Activated T-helper 2 cell treated with anti-CD3 and anti-CD28 coated beads, Interferon-gamma antibody, Interleukin-2, Interleukin-4, amounts not matched to agents 10 μg/mL and 5 μg/mL and 100 μg/mL, durations not matched to agents 14 hours and 24 hours and 36 hours (primary cell): ENCODE measurements at regions of chr14 and their contacts with region 1.

Region 1: DNA sequence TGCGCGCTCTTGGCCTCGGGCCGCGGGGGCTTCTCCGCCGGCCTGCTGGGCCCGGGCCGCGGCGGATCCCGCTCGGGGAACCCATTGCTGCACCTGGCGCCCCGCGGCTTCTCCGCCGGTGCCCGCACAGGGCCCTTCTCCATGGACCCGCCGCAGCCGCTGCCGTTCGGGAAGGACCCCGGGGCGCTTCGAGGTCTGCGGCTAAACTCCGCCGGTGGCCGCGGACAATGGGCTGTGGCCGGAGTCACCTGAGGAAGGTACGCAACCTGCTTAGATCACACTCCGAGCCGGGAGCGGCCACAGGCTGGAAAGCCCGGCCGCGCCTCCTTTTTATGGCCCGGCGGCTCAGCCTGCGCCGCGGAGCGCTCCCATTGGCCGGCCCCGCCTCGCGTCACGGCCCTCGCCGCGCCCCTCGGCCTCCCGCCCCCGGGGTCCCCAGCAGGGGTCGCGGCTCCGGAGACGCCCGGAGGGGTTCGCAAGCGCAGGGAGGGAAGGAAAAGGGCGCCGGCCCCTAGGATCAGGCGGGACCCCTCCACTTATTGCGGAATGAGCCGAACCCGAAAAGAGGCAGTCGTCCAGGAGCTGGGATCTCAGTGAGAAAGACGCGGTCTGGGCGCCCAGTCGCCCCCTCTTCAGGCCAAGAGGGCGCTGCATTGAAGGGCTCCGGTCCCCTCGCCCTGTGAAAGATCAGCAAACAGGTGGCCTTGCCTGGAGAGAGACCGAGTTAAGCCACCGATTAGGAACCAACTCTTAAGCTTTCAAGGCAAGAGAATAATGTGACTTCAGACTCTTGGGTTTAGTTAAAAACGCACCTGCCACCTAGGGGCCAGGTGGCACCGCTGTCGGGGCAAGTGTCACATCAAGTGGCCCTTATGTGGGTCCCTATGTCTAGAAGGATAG is at the start of gene GCH1:
- DNase-seq: peak; percentile 75
- H3K4me3 Mint-ChIP-seq: peak within 1 kb of the TSS; percentile 85
- H3K27ac Mint-ChIP-seq: peak within 1 kb of the TSS; percentile 81
- H3K4me1 Mint-ChIP-seq: peaks cover 40% of the 10 kb centered on the region
- H3K27me3 Mint-ChIP-seq: no peaks in the 10 kb centered on the region
- total RNA-seq, gene GCH1: 51.4 and 52.5 TPM in 2 replicates

Region 2: GRCh38 chr14:54435500-54435981 is 467.2 kb before region 1 on chr14:
- intact Hi-C with region 1: loop called (anchors 5 kb)
- DNase-seq: no peak
- H3K4me3 Mint-ChIP-seq: peak overlapping the region; percentile 70
- H3K27ac Mint-ChIP-seq: peak overlapping the region; percentile 95
- H3K4me1 Mint-ChIP-seq: peaks cover 71% of the 10 kb centered on the region
- H3K27me3 Mint-ChIP-seq: no peaks in the 10 kb centered on the region

Region 3: GRCh38 chr14:54881761-54882401 is 20.9 kb before region 1 on chr14:
- intact Hi-C with region 1: loop called (anchors 1 kb)
- DNase-seq: no peak
- H3K4me3 Mint-ChIP-seq: peak overlapping the region; percentile 82
- H3K27ac Mint-ChIP-seq: peak overlapping the region; percentile 94
- H3K4me1 Mint-ChIP-seq: peaks cover 50% of the 10 kb centered on the region
- H3K27me3 Mint-ChIP-seq: no peaks in the 10 kb centered on the region

Region 4: GRCh38 chr14:54920052-54920451 is 17.3 kb after region 1 on chr14:
- intact Hi-C with region 1: no loop called
- DNase-seq: no peak
- H3K4me3 Mint-ChIP-seq: no peak overlapping the region
- H3K27ac Mint-ChIP-seq: no peak overlapping the region
- H3K4me1 Mint-ChIP-seq: peaks cover 5% of the 10 kb centered on the region
- H3K27me3 Mint-ChIP-seq: no peaks in the 10 kb centered on the region

Region 5: GRCh38 chr14:55026793-55027561 is 124.2 kb after region 1 on chr14 and contains the starts of genes SOCS4 and WDHD1:
- intact Hi-C with region 1: loop called (anchors 5 kb)
- DNase-seq: peak; percentile 98
- H3K4me3 Mint-ChIP-seq: peak within 1 kb of the TSS; percentile 94
- H3K27ac Mint-ChIP-seq: peak within 1 kb of the TSS; percentile 90
- H3K4me1 Mint-ChIP-seq: peaks cover 48% of the 10 kb centered on the region
- H3K27me3 Mint-ChIP-seq: no peaks in the 10 kb centered on the region
- total RNA-seq, gene SOCS4: 35.1 and 37.4 TPM in 2 replicates
- total RNA-seq, gene WDHD1: 50.3 and 51.3 TPM in 2 replicates

Region 6: DNA sequence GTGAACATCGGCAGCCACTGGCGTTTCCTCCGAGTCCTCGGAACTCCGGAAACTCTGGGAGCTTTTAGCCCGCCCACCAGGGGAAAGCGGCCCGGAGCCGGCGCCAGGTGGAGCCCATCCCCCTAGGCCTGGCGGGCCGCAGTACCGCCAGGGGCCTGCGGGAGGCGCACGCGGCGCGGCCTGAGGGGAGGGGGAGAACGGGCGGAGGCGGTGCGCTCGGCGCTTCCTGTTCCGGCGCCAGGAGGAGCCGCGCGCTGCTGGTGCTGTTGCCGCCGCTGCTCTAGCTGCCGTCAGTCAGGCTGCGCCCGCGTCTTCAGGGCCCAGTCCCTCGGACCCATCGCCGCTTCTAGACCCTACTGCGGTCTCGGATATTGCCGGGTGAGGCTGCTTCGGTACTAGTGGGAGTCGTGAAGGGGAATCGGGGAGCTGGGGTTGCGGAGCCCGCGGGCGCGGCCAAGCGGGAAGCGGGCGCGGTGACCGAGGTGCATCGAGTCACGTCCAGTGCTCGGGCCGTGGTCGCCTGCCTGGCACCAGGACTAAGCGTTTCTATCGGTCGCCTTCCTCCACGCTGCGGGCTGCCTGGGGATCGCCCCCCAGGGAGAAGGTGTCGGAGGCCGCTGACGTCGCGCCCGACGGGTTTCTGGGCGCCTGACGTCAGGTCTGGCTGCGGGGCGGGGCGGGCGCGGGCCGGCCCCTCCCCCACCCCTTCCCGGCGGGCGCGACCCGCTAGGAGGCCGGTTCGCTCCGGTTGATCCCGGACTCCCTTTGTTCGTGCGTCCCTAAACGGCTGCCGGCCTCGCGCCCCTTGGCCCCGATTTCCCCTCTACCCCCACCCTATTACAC is 148.9 kb after region 1 on chr14 and contains the start of gene MAPK1IP1L:
- intact Hi-C with region 1: loop called (anchors 5 kb)
- DNase-seq: peak; percentile 89
- H3K4me3 Mint-ChIP-seq: peak within 1 kb of the TSS; percentile 86
- H3K27ac Mint-ChIP-seq: peak within 1 kb of the TSS; percentile 92
- H3K4me1 Mint-ChIP-seq: peaks cover 35% of the 10 kb centered on the region
- H3K27me3 Mint-ChIP-seq: no peaks in the 10 kb centered on the region
- total RNA-seq, gene MAPK1IP1L: 145 and 148 TPM in 2 replicates

Region 7: GRCh38 chr14:55327179-55327578 is 424.4 kb after region 1 on chr14:
- intact Hi-C with region 1: no loop called
- DNase-seq: no peak
- H3K4me3 Mint-ChIP-seq: no peak overlapping the region
- H3K27ac Mint-ChIP-seq: no peak overlapping the region
- H3K4me1 Mint-ChIP-seq: peaks cover 36% of the 10 kb centered on the region
- H3K27me3 Mint-ChIP-seq: no peaks in the 10 kb centered on the region